ENCODE measurements at regions of chr5 and their contacts with region 1.

Region 1: DNA sequence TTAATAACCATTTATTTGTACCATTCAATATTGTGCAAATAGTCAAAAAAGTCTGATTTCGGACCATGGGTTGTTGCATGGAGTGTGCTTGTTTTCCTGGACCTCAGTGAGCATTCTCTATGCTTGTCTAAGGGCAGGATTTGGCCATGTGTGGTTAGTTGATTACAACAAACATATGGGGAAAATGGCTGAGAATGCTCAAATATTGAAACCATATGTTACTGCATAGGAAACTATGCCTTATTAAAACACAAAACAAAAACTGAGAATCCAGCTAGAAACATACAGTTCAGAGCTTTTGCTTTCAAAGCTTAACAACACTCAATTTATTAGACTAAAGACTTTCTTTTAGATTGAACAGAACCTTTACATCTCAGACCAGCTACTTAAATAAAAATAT is 928.3 kb downstream of the NR2F1-AS1 start:
- DNase-seq: no peak
- H3K4me3 ChIP-seq: no peak overlapping the region
- H3K27ac ChIP-seq: no peak overlapping the region
- H3K4me1 ChIP-seq: no peaks in the 10 kb centered on the region
- H3K27me3 ChIP-seq: no peaks in the 10 kb centered on the region
- CTCF ChIP-seq: no peak
- EP300 ChIP-seq: no peak
- POLR2A ChIP-seq: no peak

Region 2: GRCh38 chr5:92492908-92493307 is 159.8 kb before region 1 on chr5:
- in situ Hi-C with region 1: no loop called
- intact Hi-C with region 1: no loop called
- DNase-seq: no peak
- H3K4me3 ChIP-seq: no peak overlapping the region
- H3K27ac ChIP-seq: no peak overlapping the region
- H3K4me1 ChIP-seq: no peaks in the 10 kb centered on the region
- H3K27me3 ChIP-seq: no peaks in the 10 kb centered on the region
- CTCF ChIP-seq: no peak
- EP300 ChIP-seq: no peak
- POLR2A ChIP-seq: no peak

Region 3: DNA sequence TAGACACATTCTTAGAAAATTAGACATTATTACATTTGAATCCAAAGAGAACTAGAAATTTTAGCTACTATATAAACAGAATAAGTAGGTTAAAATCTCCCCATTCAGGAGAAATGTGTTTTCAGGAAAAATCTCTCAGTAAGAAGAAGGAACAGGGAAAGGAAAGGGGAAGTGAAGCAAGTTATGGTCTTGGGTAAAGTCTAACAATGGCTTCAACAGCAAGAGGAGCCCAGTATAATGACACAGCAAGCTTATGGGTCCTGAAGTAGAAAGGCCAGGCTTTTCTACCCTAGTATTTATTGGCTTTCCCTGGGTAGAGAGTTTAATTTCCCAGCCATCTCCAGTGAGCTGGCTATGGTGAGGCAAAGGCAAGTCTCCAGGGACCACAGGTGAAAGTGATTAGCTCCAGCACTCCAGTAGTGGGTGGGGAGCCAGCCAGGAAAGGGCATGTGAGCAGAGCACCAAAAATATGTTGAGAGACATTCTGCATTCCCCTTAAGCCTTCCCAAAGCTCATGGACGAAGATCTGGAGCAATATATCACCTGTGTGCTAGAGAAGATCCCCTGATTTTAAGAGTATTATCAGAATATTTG is 53.4 kb before region 1 on chr5:
- in situ Hi-C with region 1: no loop called
- intact Hi-C with region 1: loop called (anchors 2 kb)
- DNase-seq: no peak
- H3K4me3 ChIP-seq: no peak overlapping the region
- H3K27ac ChIP-seq: no peak overlapping the region
- H3K4me1 ChIP-seq: no peaks in the 10 kb centered on the region
- H3K27me3 ChIP-seq: no peaks in the 10 kb centered on the region
- CTCF ChIP-seq: no peak
- EP300 ChIP-seq: no peak
- POLR2A ChIP-seq: no peak